Right ventricle myocardium inferior (tissue), 1 donor: ENCODE measurements at regions of chr15 and their contacts with region 1.

Region 1: DNA sequence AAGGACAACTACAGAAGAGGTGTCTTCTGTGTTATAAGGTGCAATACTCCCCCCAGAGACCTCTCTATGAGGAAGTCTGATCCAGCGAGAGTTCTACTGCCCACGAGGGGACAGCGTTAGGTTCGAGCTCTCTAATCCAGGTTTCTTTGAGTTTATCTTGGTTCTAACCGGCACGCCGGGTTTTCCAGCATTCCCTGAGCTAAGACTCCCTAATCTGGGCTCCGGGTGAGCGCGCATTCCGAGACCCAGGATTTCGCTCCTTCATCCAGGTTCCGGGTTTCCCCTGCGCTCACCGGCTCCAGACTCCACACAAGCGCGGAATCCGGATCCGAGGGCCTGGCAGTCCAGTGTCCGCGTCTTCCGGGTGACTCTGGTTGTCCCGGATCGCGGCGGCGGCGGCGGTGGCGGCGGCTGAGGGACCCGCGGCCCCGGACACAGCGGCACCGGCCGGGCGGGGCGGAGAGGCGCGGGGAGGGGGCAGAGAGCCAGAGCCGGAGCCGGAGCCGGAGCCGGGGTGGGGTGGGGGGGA is at the start of gene ZNF609:
- DNase-seq: peak; percentile 95
- ATAC-seq: peak; percentile 85
- total RNA-seq, gene ZNF609: 16.9 TPM

Region 2: DNA sequence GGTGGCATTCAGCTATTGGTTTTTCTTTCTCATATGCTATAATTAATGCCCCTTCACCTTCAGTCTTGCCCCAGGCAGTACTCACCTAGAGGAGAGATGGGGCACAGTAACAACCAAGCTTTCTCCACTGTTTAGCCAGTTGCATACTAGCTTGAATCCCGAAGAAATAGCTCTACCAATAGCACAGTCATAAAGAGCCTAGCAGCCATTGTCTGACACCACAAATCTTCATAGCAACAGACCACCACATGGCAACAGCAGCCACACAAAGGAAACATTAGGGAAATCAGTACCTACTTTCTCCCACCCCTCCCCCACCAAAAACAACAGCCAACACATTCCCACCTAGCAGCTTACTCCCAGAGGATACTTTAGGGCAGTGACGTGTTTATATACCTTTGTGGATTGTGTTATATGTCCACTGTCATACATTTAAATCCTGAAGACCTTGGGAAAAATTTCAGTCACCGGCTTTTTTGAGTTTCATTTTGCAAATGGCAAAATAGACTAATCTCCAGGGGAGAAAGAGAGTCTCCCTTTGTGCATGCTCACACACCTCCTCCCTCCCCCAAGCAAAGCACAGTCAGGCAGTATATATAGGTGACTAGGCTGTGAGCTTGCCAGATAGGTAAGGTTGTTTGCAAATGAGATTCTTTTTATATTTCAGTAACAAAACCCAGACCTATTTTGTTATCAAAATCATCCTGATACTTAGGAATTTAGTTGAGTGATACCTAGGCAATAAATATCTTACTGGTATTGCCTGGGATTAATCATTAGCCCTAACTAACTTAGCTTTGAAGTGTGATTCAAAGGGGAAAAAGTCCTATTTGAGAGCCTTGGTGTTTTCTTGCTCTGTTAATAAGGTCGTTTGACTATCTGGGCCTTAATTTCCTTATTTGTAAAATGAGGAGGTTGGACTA is 174.6 kb after region 1 on chr15:
- intact Hi-C with region 1: loop called (anchors 10 kb)
- DNase-seq: no peak
- ATAC-seq: no peak